ENCODE measurements at regions of chr4 and their contacts with region 1.

Region 1: DNA sequence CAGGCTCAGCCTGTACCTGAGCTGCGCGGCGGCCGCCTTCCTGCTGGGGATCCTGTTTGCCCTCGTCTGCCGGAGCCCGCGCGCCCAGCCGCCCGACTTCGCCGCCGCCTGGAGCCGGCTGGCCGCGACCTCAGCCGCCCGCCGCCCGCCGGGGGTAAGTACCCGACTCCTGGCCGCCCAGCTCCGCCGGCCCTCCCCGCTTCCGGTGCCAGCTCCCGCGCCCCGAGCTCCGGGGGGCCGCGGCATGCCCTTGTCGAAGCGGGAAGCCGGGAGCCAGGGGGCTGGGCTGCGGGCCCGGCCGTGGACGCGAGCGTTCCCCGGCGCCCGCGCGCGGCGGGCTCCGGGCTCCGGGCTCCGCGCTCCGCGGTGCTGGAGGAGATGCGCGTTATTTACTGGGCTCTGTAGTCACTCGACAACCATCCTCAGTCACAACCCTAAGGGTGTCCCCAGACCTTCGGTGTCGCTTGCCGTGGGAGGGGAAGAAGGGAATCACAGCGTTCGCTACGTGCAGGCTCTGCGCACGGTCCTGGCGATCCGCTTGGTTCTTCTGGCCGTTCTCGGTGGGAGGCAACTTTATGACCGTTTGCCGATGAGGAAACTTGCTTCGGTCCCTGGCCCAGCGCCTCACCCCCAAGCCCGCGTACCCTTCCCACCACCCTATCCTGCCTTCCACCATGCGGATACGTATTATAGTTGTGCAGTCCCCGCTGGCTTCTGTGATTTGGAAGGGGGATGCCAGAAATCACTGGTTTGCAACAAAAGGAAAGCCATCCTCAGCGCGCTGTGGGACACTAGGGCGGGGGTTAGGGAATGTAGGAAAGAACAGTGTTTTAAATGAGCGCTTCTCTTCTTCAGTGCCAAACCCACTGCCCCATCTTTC is 944 bp downstream of the SNX25 start:
- DNase-seq: peak; percentile 13
- ATAC-seq: peak; percentile 28
- H3K4me3 ChIP-seq: peak overlapping the region; percentile 96 to 99 (median 99)
- H3K27ac ChIP-seq: peak overlapping the region; percentile 60
- H3K4me1 ChIP-seq: peaks cover 52% of the 10 kb centered on the region
- H3K27me3 ChIP-seq: no peaks in the 10 kb centered on the region; a peak in 1 of 5 replicates
- CTCF ChIP-seq: no peak
- EP300 ChIP-seq: no peak
- POLR2A ChIP-seq: no peak
- RAD21 ChIP-seq: no peak

Region 2: DNA sequence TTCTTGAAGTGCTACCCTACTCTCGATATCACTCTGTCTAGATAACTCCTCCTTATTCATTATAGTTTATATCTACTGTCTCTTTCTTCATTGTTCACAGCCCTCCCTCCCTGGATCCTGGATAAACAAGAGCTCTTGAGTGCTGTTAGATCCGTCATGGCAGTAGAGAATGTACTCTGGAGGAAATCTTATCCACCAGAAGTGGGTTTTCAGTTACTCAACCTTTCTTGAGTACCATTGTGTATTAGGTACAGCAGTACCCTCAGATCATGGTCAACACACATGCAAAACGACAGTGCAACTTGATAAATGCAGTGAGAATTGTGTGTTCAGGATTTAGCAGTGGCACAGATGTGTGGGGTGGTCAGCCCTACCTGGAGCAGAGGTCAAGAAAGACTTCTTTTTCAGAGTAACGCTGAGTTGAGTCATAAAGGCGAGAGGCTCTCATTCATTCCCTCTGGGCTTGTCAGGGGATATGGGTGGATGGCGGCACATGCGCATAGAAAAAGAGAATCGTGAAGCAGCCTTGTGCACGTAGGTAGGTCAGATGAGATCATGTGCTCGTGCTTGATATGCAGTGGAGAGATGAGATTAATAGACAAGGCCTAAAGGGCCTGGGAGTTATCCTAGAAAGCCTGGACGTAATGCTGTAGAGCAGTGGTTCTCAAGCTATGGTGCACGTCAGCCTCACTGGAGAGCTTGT is 88.5 kb after region 1 on chr4:
- CTCF ChIA-PET with region 1: no interaction called
- POLR2A ChIA-PET with region 1: no interaction called
- in situ Hi-C with region 1: no loop called
- intact Hi-C with region 1: loop called (anchors 1 kb)
- DNase-seq: no peak
- ATAC-seq: no peak
- H3K4me3 ChIP-seq: no peak overlapping the region
- H3K27ac ChIP-seq: no peak overlapping the region
- H3K4me1 ChIP-seq: no peaks in the 10 kb centered on the region
- H3K27me3 ChIP-seq: no peaks in the 10 kb centered on the region
- CTCF ChIP-seq: no peak
- EP300 ChIP-seq: no peak
- POLR2A ChIP-seq: no peak
- RAD21 ChIP-seq: no peak

Region 3: DNA sequence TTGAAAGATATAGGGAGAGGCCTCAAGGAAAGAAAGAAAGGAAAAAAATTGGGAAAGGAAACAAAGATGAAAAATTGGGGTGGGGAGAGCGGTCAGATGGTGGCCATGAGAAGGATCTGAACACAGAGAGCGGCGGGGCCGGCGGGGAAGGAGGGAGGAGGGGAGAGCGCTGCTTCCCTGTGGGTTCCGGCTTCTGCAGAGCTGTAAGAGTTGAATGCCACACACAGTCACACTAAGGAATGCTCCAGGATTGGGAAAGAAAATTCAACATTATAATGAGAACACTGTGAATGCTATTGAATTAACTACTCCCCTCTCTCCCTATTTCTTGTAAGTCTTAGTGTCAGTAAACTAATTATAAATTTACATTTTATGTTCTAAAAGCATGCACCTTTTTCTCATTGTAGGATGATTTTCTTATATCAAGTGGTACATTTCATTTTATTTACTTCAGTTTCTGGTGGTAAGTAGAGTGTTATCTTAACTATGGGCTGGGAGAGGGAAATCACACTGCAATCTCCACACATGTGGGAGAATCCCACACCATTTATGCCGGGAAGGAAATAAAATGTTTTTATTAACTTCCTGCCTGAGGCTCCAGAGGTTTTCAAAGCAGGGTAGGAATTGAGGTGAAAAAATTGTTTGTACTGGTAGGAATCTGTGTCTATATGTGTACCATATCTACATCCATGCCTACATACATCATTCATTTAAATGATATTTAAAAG is 1056.6 kb after region 1 on chr4:
- CTCF ChIA-PET with region 1: no interaction called
- POLR2A ChIA-PET with region 1: no interaction called
- in situ Hi-C with region 1: no loop called
- intact Hi-C with region 1: no loop called
- DNase-seq: peak; percentile 58
- ATAC-seq: peak; percentile 97
- H3K4me3 ChIP-seq: peak overlapping the region; percentile 64 to 86 (median 69)
- H3K27ac ChIP-seq: peak overlapping the region; percentile 85
- H3K4me1 ChIP-seq: peaks cover 48% of the 10 kb centered on the region
- H3K27me3 ChIP-seq: no peaks in the 10 kb centered on the region
- CTCF ChIP-seq: peak; percentile 3; the same call in 1 of the 2 replicates
- EP300 ChIP-seq: no peak
- POLR2A ChIP-seq: peak; percentile 43 to 59; a peak in 2 of 4 replicates
- RAD21 ChIP-seq: no peak